ENCODE measurements at regions of chr3 and their contacts with region 1.

Region 1: GRCh38 chr3:10883478-10884234 is 67.6 kb downstream of the SLC6A11 start:
- DNase-seq: peak in 1 of 2 experiments; percentile 61
- H3K4me3 ChIP-seq: no peak overlapping the region
- H3K27ac ChIP-seq: no peak overlapping the region
- H3K4me1 ChIP-seq: no peaks in the 10 kb centered on the region; a peak in 1 of 7 replicates
- H3K27me3 ChIP-seq: peaks cover 0 to 15% (median 10%) of the 10 kb centered on the region in 4 experiments; a peak in 6 of 7 replicates
- CTCF ChIP-seq: peak in 2 of 3 experiments; percentile 66 to 68; a peak in 3 of 4 replicates
- EP300 ChIP-seq: no peak
- POLR2A ChIP-seq: no peak
- RAD21 ChIP-seq: peak; percentile 70 to 76

Region 2: GRCh38 chr3:10835406-10835805 is 48.2 kb before region 1 on chr3:
- CTCF ChIA-PET with region 1: interaction called, 16 read pairs
- POLR2A ChIA-PET with region 1: no interaction called
- DNase-seq: peak in 1 of 2 experiments; percentile 49
- H3K4me3 ChIP-seq: no peak overlapping the region
- H3K27ac ChIP-seq: no peak overlapping the region
- H3K4me1 ChIP-seq: peaks cover 0 to 2% (median 0%) of the 10 kb centered on the region in 4 experiments; a peak in 1 of 7 replicates
- H3K27me3 ChIP-seq: no peaks in the 10 kb centered on the region; a peak in 1 of 7 replicates
- CTCF ChIP-seq: peak; percentile 56 to 68 (median 59)
- EP300 ChIP-seq: no peak
- POLR2A ChIP-seq: no peak
- RAD21 ChIP-seq: peak; percentile 48 to 65

Region 3: DNA sequence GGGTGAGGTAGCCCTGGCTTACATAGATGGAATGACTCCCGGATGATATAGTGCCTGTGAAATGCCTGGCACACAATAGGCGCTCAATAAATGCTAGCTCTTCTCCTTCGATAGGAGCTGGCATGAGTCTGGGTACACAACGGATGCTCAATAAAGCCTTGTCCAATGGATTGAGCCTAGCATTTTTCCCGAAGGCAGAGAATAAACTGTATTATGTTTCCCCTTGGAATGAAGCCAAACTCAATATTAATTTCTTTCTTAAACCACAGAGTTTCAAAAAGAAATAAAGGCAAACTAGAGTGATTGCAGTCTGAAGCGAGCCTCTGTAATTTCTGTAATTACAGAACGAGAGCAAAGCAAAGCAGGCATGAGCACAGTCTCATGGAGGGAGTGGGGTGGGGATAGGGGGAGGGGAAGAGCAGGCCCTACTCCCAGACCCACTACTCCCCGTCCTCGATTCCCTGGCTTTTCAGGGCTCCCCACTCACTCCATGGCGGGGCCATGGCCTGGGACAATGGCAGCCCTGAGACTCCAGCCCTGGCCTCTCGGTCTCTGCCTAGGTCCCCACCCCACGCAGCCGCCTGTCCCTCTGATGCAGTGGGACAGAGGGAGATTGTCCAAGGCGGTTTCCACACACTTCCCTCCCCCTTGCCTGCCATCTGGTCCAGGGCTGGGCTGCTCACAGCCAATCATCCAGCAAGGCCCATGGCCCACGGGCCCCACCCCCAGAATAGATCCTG is 126.9 kb after region 1 on chr3:
- CTCF ChIA-PET with region 1: no interaction called
- POLR2A ChIA-PET with region 1: no interaction called
- DNase-seq: no peak
- H3K4me3 ChIP-seq: no peak overlapping the region
- H3K27ac ChIP-seq: no peak overlapping the region
- H3K4me1 ChIP-seq: no peaks in the 10 kb centered on the region; a peak in 1 of 7 replicates
- H3K27me3 ChIP-seq: no peaks in the 10 kb centered on the region
- CTCF ChIP-seq: no peak
- EP300 ChIP-seq: no peak
- POLR2A ChIP-seq: no peak
- RAD21 ChIP-seq: no peak